ENCODE measurements at regions of chr1 and their contacts with region 1.

Region 1: GRCh38 chr1:92536980-92537884 is 50.5 kb upstream of the GFI1 start:
- DNase-seq: peak in 6 of 14 experiments; percentile 5 to 88 (median 53)
- ATAC-seq: peak; percentile 79
- H3K4me3 ChIP-seq: peak overlapping the region; percentile 25
- H3K4me3 Mint-ChIP-seq: peak overlapping the region; percentile 77
- H3K27ac ChIP-seq: peak overlapping the region; percentile 57 to 70
- H3K27ac Mint-ChIP-seq: peak overlapping the region; percentile 87
- H3K4me1 ChIP-seq: peaks cover 5% of the 10 kb centered on the region
- H3K4me1 Mint-ChIP-seq: peaks cover 78% of the 10 kb centered on the region
- H3K27me3 ChIP-seq: no peaks in the 10 kb centered on the region
- H3K27me3 Mint-ChIP-seq: no peaks in the 10 kb centered on the region
- CTCF ChIP-seq: no peak

Region 2: GRCh38 chr1:92317836-92318493 is 219.3 kb before region 1 on chr1:
- CTCF ChIA-PET with region 1: no interaction called
- POLR2A ChIA-PET with region 1: interaction called, 10 read pairs
- intact Hi-C with region 1: loop called in 1 of 2 experiments (anchors 5 kb)
- DNase-seq: peak in 4 of 14 experiments; percentile 11 to 72 (median 60)
- ATAC-seq: peak; percentile 39
- H3K4me3 ChIP-seq: no peak overlapping the region
- H3K4me3 Mint-ChIP-seq: peak overlapping the region; percentile 30
- H3K27ac ChIP-seq: peak overlapping the region in 1 of 2 donors; percentile 40
- H3K27ac Mint-ChIP-seq: peak overlapping the region; percentile 85
- H3K4me1 ChIP-seq: peaks cover 38% of the 10 kb centered on the region
- H3K4me1 Mint-ChIP-seq: peaks cover 59% of the 10 kb centered on the region
- H3K27me3 ChIP-seq: no peaks in the 10 kb centered on the region
- H3K27me3 Mint-ChIP-seq: no peaks in the 10 kb centered on the region
- CTCF ChIP-seq: no peak

Region 3: DNA sequence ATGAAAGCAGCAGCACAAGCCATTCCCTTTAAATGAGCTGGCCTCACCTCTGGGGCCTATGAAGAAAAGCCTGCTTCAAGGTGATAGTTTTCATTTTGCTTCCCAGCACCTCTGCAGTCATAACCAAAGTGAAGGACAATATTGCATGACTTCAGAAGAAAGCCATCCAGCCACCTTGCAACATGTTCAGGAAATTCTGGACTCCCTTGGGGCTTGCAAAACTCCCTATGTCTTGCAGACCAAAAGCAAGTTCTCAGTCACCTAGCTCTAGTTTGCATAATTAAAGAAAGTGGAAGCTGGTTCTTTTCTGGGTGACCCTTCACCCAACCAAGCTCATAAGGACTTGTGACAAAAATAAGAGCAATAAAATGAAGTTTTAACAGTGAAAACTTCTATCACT is 138.2 kb before region 1 on chr1:
- CTCF ChIA-PET with region 1: no interaction called
- POLR2A ChIA-PET with region 1: no interaction called
- intact Hi-C with region 1: no loop called
- DNase-seq: no peak
- ATAC-seq: no peak
- H3K4me3 ChIP-seq: no peak overlapping the region
- H3K4me3 Mint-ChIP-seq: no peak overlapping the region
- H3K27ac ChIP-seq: no peak overlapping the region
- H3K27ac Mint-ChIP-seq: no peak overlapping the region
- H3K4me1 ChIP-seq: no peaks in the 10 kb centered on the region
- H3K4me1 Mint-ChIP-seq: no peaks in the 10 kb centered on the region
- H3K27me3 ChIP-seq: no peaks in the 10 kb centered on the region
- H3K27me3 Mint-ChIP-seq: no peaks in the 10 kb centered on the region
- CTCF ChIP-seq: no peak

Region 4: DNA sequence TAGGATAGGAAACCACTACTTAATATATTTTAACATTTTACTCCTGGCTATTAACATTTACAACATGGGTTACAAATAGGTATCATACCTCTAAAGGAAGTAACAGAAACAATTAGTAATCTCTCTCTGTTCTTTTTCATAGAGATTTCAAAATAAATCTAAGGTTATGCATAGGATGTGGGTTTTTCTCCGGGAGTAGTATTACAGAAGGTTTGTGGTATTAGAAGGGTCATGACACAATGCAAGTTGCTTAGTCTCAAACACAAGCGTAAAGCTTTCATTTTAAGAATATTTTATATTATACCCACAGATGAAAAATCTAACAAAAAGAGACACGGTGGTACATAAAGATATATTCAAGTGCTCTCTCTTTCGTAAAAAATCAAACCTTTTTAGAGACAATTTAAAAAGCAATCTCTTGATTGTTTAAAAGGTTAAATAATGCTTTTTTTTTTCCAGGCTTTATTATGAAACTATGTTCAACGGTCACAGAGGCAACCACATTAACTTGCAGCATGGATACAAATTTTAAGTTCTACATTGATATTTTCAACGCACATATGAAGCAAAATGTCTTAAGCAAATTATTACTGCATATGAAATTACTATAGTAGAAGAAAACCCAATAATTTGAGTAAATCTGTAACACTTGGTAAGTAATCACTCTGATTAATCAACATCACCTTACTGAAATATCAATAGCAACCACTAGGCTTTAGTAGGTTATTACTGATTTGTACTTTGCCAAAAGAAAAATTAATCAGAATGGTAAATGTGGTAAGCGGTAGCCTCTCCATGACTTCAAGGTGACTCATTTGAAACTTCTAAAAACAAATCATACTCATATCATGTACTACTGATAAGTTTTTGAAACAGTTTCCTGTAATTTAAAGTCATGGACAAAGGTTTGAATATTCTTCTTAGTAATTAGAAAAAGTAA is 46.9 kb after region 1 on chr1:
- CTCF ChIA-PET with region 1: interaction called, 4 read pairs
- POLR2A ChIA-PET with region 1: interaction called, 21 read pairs
- intact Hi-C with region 1: loop called (anchors 1 to 5 kb)
- DNase-seq: peak in 3 of 14 experiments; percentile 58 to 89 (median 66)
- ATAC-seq: peak; percentile 93
- H3K4me3 ChIP-seq: peak overlapping the region; percentile 34
- H3K4me3 Mint-ChIP-seq: peak overlapping the region; percentile 34
- H3K27ac ChIP-seq: peak overlapping the region; percentile 23 to 56
- H3K27ac Mint-ChIP-seq: peak overlapping the region; percentile 61
- H3K4me1 ChIP-seq: peaks cover 13% of the 10 kb centered on the region
- H3K4me1 Mint-ChIP-seq: peaks cover 59% of the 10 kb centered on the region
- H3K27me3 ChIP-seq: no peaks in the 10 kb centered on the region
- H3K27me3 Mint-ChIP-seq: no peaks in the 10 kb centered on the region
- CTCF ChIP-seq: no peak

Region 5: GRCh38 chr1:92599184-92599583 is 62.0 kb after region 1 on chr1:
- CTCF ChIA-PET with region 1: no interaction called
- POLR2A ChIA-PET with region 1: interaction called, 4 read pairs
- intact Hi-C with region 1: loop called in 1 of 2 experiments (anchors 5 kb)
- DNase-seq: peak in 3 of 14 experiments; percentile 63 to 65 (median 63)
- ATAC-seq: peak; percentile 46
- H3K4me3 ChIP-seq: no peak overlapping the region
- H3K4me3 Mint-ChIP-seq: no peak overlapping the region
- H3K27ac ChIP-seq: no peak overlapping the region
- H3K27ac Mint-ChIP-seq: no peak overlapping the region
- H3K4me1 ChIP-seq: no peaks in the 10 kb centered on the region
- H3K4me1 Mint-ChIP-seq: peaks cover 5% of the 10 kb centered on the region
- H3K27me3 ChIP-seq: no peaks in the 10 kb centered on the region
- H3K27me3 Mint-ChIP-seq: no peaks in the 10 kb centered on the region
- CTCF ChIP-seq: peak; percentile 76